Posterior cingulate gyrus (tissue), 11 donors: ENCODE measurements at regions of chr4 and their contacts with region 1.

Region 1: GRCh38 chr4:7256984-7257810 is 64.9 kb downstream of the SORCS2 start:
- DNase-seq: peak in 1 of 10 donors; percentile 54

Region 2: DNA sequence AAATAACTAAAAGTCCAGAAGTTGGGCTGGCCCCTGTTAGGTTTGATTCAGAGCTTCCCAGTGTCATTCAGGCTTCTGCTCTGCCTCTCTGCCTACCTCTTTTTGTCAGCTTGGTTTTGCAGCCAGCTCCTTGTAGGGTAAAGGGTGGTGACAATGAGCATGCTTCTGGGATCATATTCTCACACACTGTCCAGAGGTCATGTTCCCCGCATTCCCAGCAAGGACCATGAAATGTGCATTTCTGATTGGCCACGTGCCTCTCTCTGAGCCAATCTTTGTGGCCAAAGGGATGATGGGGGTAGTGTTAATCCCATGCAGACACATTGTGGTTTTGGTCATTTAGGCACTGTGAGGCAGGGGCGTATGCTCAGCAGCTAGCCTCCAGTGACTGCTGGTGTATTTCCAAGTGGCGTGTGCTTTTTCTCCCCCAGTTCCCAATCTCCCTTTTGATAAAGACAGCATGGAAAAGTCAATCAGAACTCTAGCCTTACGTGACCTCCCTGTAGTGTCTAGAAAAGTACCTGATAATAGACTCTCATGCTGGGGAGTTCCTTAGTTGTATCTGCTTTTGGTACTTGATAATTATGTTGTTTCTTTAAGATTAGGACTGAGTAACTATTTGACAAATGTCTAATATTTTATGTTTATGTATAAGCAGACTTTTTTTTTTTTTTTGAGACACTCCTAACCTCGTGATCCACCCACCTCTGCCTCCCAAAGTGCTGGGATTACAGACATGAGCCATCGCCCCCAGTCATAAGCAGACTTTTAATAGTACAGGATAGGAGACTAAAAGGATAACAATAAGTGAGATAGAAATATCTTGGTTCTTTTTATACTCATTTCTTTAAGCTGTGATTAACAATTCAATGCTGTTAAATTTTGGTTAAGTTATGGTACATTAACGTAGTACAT is 416.9 kb before region 1 on chr4:
- intact Hi-C with region 1: no loop called
- DNase-seq: no peak

Region 3: DNA sequence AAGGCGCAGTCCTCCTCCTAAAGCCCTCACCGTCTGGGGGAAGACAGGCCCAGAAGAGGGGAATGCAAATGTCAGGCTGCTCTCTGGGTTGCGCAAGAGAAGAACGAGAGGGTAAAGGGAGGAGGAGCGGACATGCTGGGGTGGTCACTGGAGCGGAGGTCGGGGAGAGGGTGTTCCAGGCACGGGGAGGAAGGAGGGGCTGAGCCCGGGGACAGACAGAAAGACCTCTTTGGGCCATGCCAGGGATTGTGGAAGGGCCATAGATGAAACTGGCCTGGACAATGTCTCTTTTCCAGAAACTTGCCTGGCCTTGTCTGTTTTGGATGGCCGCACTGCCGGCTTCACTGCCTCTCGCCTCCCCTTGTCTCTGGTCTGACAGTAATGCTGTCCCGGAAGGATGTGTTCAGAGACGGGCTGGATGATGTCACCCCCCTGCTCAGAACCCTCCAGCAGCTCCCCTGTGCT is 56.2 kb after region 1 on chr4:
- intact Hi-C with region 1: no loop called
- DNase-seq: peak in 8 of 10 donors; percentile 63 to 97 (median 74)

Region 4: GRCh38 chr4:7415927-7416686 is 158.9 kb after region 1 on chr4:
- intact Hi-C with region 1: loop called (anchors 1 kb)
- DNase-seq: peak in 6 of 10 donors; percentile 0 to 50 (median 14)